Posterior vena cava (tissue), 2 donors: ENCODE measurements at regions of chr3 and their contacts with region 1.

Region 1: DNA sequence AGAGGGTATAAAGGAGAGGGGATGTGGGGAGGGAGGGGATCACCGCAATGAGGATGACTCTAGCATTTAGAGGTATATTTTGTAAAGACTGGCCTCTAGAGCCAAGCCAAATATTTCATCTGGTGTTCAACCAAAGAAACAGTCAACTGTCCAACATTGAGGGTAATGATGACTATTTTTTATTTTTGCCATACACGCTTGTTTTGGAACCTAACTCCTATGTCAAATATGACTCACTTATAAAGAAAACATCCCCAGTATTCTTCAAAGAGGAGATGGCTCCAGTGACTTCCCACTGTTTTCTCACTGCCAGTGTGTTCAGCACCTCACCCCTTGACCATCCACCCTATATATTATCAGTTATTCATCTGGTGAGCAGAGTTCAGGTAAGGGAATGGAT is 77.3 kb downstream of the WNT5A start:
- DNase-seq: no peak

Region 2: DNA sequence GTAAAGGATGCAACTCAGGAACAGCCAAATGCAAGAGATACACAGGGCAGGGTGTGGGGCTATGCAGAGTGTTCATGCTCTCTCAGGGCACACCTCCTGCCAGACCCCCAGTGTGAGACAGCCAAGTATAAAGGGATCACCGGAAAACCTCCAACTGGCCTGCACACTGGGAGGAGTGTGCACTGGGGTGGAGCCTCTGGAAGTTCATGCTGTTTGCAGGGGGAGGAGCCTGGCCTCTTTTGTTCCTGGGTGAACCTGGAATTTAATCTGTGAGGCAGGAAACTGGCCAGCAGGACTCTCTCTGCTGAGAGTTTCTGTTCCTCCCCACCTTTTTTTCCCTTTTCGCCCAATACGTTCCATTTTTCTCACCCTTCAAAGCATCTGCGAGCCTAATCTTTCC is 126.8 kb before region 1 on chr3:
- intact Hi-C with region 1: no loop called
- DNase-seq: no peak

Region 3: DNA sequence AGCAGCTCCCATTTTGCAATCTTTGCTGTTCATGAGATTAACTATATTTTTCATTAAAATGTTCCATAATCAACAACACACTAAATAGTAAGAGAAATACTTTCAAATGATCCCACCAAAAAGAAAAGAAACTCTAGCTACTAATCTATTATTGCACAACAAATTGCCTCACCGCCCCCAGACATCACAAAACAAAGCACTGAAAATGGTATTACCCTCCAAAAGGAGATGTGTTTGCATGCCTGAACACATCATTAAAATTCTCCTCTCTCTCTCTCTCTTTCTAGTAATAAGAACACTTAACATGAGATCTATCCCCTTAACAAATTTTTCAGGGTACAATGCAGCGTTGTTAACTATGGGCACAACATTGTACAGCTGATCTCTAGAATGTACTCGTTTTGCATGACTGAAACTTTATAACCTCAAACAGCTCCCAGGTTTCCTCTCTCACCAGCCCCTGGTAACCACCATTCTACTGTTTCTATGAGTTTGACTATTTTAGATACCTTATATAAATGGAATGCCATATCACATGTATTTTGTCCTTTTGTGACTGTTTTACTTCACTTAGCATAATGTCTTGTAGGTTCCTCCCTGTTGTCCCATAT is 44.2 kb after region 1 on chr3:
- intact Hi-C with region 1: no loop called
- DNase-seq: no peak

Region 4: GRCh38 chr3:56423661-56424099 is 1013.9 kb after region 1 on chr3:
- intact Hi-C with region 1: loop called in 1 of 2 experiments (anchors 5 kb)
- DNase-seq: no peak

Region 5: GRCh38 chr3:56894881-56895431 is 1485.2 kb after region 1 on chr3:
- intact Hi-C with region 1: no loop called
- DNase-seq: no peak